ENCODE measurements at regions of chr2 and their contacts with region 1.

Region 1: GRCh38 chr2:174051741-174052583 is 86.8 kb upstream of the SP3 start:
- DNase-seq: peak in 3 of 4 experiments; percentile 34 to 85 (median 81)
- ATAC-seq: peak; percentile 96
- H3K4me3 ChIP-seq: no peak overlapping the region
- H3K27ac ChIP-seq: peak overlapping the region; percentile 6; the same call in 2 of the 3 replicates
- H3K4me1 ChIP-seq: peaks cover 13 to 14% of the 10 kb centered on the region in 2 experiments
- H3K27me3 ChIP-seq: no peaks in the 10 kb centered on the region
- CTCF ChIP-seq: peak in 1 of 3 experiments; percentile 36; a peak in 1 of 6 replicates
- EP300 ChIP-seq: peak; percentile 49; the same call in 1 of the 2 replicates
- POLR2A ChIP-seq: no peak
- RAD21 ChIP-seq: peak in 1 of 2 experiments; percentile 30; a peak in 3 of 4 replicates

Region 2: DNA sequence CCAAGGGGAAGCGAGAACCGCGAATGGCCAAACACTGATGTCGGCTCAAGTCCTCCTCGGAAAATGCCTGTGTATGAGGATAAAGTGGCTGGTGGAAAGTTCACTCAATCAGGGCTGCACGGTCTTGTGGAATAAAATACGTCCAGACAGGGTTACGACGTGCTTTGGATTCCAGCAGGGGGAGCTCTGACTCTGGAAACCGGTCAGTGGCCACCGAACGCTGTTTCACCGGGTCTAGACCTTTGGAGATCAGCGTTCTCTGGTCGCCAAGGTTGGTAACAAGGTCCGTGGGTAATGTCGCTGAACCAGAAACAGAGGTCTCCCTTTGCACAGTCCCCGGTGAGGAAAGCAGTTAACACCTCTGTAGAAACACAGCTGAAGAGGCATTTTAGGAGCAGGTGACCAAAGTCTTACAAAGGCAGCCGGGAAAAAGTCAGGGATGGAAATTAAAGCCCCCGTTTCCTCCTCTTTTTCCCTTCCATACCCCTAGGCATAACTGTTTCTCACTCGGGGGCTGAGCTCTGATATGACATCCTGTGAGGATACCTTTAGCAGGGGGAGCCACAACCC is 649.5 kb before region 1 on chr2:
- CTCF ChIA-PET with region 1: no interaction called
- POLR2A ChIA-PET with region 1: no interaction called
- in situ Hi-C with region 1: no loop called
- intact Hi-C with region 1: loop called (anchors 5 kb)
- DNase-seq: peak; percentile 71 to 88 (median 80)
- ATAC-seq: peak; percentile 98
- H3K4me3 ChIP-seq: no peak overlapping the region
- H3K27ac ChIP-seq: no peak overlapping the region
- H3K4me1 ChIP-seq: no peaks in the 10 kb centered on the region
- H3K27me3 ChIP-seq: peaks cover 29 to 40% of the 10 kb centered on the region in 2 experiments
- CTCF ChIP-seq: peak; percentile 93 to 96 (median 94)
- EP300 ChIP-seq: no peak
- POLR2A ChIP-seq: no peak
- RAD21 ChIP-seq: peak; percentile 94 to 98

Region 3: DNA sequence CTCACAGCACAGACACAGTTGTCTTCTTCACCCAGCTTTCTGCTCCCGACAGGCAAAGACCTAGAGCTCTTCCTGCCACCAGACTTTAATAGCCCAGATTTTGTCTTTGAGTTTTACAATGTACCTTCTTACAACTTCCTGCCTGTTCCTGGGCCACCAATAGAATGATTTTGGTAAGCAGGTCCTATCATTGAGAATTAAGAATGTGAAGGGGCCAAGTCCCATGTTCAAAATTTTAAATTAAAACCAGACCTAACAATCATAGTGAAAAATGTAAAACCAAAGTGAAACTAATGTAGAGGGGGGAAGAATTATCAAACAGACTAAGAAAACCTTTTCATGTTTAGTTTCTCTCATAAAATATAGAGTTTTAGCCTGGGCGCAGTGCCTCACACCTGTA is 159.6 kb before region 1 on chr2:
- CTCF ChIA-PET with region 1: no interaction called
- POLR2A ChIA-PET with region 1: no interaction called
- in situ Hi-C with region 1: no loop called
- intact Hi-C with region 1: loop called (anchors 5 kb)
- DNase-seq: no peak
- ATAC-seq: no peak
- H3K4me3 ChIP-seq: no peak overlapping the region
- H3K27ac ChIP-seq: no peak overlapping the region
- H3K4me1 ChIP-seq: peaks cover 0 to 16% of the 10 kb centered on the region in 2 experiments; a peak in 2 of 5 replicates
- H3K27me3 ChIP-seq: no peaks in the 10 kb centered on the region
- CTCF ChIP-seq: no peak
- EP300 ChIP-seq: no peak
- POLR2A ChIP-seq: no peak
- RAD21 ChIP-seq: no peak

Region 4: GRCh38 chr2:173982918-173983317 is 69.0 kb before region 1 on chr2:
- CTCF ChIA-PET with region 1: no interaction called
- POLR2A ChIA-PET with region 1: no interaction called
- in situ Hi-C with region 1: no loop called
- intact Hi-C with region 1: no loop called
- DNase-seq: no peak
- ATAC-seq: no peak
- H3K4me3 ChIP-seq: no peak overlapping the region
- H3K27ac ChIP-seq: no peak overlapping the region
- H3K4me1 ChIP-seq: peaks cover 0 to 5% of the 10 kb centered on the region in 2 experiments; a peak in 1 of 5 replicates
- H3K27me3 ChIP-seq: peaks cover 0 to 8% of the 10 kb centered on the region in 2 experiments; a peak in 4 of 5 replicates
- CTCF ChIP-seq: no peak
- EP300 ChIP-seq: no peak
- POLR2A ChIP-seq: no peak
- RAD21 ChIP-seq: no peak

Measured in K562 (cell line).